ENCODE measurements at regions of chr6 and their contacts with region 1.

Region 1: GRCh38 chr6:30742316-30743098 is at the start of gene FLOT1:
- DNase-seq: peak; percentile 92
- H3K4me3 Mint-ChIP-seq: peak within 1 kb of the TSS; percentile 100
- H3K27ac Mint-ChIP-seq: peak within 1 kb of the TSS; percentile 99
- H3K4me1 Mint-ChIP-seq: peaks cover 67% of the 10 kb centered on the region
- H3K27me3 Mint-ChIP-seq: peaks cover 4% of the 10 kb centered on the region
- total RNA-seq, gene FLOT1: 252 and 262 TPM in 2 replicates

Region 2: DNA sequence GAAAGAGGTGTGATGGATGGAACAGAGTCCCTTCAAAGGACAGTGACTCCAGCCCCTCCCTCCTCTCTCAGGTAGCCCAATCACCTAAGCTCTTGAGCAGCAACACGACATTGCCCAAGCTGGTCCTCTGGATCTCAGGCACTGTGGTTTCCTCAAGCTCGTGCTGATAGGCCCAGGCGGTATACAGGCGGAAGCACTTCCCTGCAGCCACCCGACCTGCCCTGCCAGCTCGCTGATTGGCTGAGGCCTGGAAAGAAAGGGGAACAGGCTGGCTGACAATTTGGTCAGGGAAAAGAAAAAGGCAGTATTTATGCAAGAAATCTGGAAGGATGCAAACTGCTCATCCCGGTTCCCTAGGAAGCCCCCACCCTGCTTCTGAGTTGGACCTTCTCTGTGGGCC is 86.0 kb before region 1 on chr6:
- intact Hi-C with region 1: no loop called
- DNase-seq: no peak
- H3K4me3 Mint-ChIP-seq: no peak overlapping the region
- H3K27ac Mint-ChIP-seq: no peak overlapping the region
- H3K4me1 Mint-ChIP-seq: peaks cover 10% of the 10 kb centered on the region
- H3K27me3 Mint-ChIP-seq: no peaks in the 10 kb centered on the region

Region 3: DNA sequence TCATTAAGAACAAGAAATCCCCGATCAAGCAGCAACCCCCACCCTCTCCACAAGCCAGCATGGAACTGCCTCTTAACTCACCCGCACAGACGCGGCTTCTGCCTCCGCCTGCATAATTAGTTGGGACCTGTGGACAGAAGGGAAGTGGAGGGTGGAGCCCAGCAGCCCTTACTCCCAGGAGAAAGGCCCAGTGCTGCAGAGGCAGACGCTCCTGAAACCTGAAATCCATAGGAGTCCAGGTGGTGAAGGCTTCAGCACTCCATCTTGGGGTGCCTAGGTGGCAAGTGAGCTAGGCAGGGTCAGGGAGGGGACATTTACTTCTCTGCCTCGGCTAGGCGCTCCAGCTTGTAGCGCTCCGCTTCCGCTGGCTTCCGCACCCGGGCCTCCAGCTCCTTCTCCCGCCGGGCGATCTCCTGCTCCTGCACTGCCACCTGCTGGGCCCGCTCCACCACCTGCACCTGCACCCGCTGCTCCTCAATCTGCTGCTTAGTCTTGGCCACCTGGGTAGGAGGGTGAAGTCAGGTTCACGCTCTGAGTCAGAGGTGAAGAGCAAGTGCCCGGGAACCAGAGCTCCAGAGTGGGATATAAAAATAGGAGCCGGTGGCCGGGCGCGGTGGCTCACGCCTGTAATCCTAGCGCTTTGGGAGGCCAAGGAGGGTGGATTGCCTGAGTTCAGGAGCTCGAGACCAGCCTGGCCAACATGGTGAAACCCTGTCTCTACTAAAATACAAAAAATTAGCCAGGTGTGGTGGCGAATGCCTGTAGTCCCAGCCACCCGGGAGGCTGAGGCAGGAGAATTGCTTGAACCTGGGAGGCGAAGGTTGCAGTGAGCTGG is 11.7 kb before region 1 on chr6:
- intact Hi-C with region 1: loop called (anchors 1 kb)
- DNase-seq: peak; percentile 79
- H3K4me3 Mint-ChIP-seq: peak overlapping the region; percentile 19
- H3K27ac Mint-ChIP-seq: peak overlapping the region; percentile 55
- H3K4me1 Mint-ChIP-seq: peaks cover 51% of the 10 kb centered on the region
- H3K27me3 Mint-ChIP-seq: no peaks in the 10 kb centered on the region

Region 4: GRCh38 chr6:30787954-30788353 is 45.4 kb after region 1 on chr6:
- intact Hi-C with region 1: loop called (anchors 1 kb)
- DNase-seq: peak; percentile 23
- H3K4me3 Mint-ChIP-seq: peak overlapping the region; percentile 68
- H3K27ac Mint-ChIP-seq: peak overlapping the region; percentile 96
- H3K4me1 Mint-ChIP-seq: peaks cover 60% of the 10 kb centered on the region
- H3K27me3 Mint-ChIP-seq: no peaks in the 10 kb centered on the region

Region 5: GRCh38 chr6:30814136-30815040 is 71.9 kb after region 1 on chr6:
- intact Hi-C with region 1: loop called (anchors 1 kb)
- DNase-seq: peak; percentile 47
- H3K4me3 Mint-ChIP-seq: peak overlapping the region; percentile 72
- H3K27ac Mint-ChIP-seq: peak overlapping the region; percentile 99
- H3K4me1 Mint-ChIP-seq: peaks cover 86% of the 10 kb centered on the region
- H3K27me3 Mint-ChIP-seq: peaks cover 1% of the 10 kb centered on the region

Region 6: GRCh38 chr6:30877419-30878371 is 135.2 kb after region 1 on chr6:
- intact Hi-C with region 1: loop called (anchors 1 kb)
- DNase-seq: peak; percentile 60
- H3K4me3 Mint-ChIP-seq: peak overlapping the region; percentile 43
- H3K27ac Mint-ChIP-seq: peak overlapping the region; percentile 75
- H3K4me1 Mint-ChIP-seq: peaks cover 43% of the 10 kb centered on the region
- H3K27me3 Mint-ChIP-seq: peaks cover 3% of the 10 kb centered on the region

Region 7: GRCh38 chr6:31203345-31203979 is 461.0 kb after region 1 on chr6:
- intact Hi-C with region 1: loop called (anchors 1 kb)
- DNase-seq: peak; percentile 54
- H3K4me3 Mint-ChIP-seq: peak overlapping the region; percentile 90
- H3K27ac Mint-ChIP-seq: peak overlapping the region; percentile 95
- H3K4me1 Mint-ChIP-seq: peaks cover 54% of the 10 kb centered on the region
- H3K27me3 Mint-ChIP-seq: no peaks in the 10 kb centered on the region

Measured in activated T-helper 1 cell treated with anti-CD3 and anti-CD28 coated beads, Interleukin-12 subunit alpha, Interleukin-12 subunit beta, Interleukin-2, Interleukin-4 antibody, amounts not matched to agents 30 ng/mL and 10 ng/mL and 1 ng/mL, durations not matched to agents 14 hours and 24 hours and 36 hours (primary cell).